HEK293 (cell line): ENCODE measurements at regions of chr1 and their contacts with region 1.

Region 1: GRCh38 chr1:9861360-9861759 is 37.6 kb upstream of the CLSTN1 start:
- H3K4me3 ChIP-seq: no peak overlapping the region
- H3K27ac ChIP-seq: no peak overlapping the region
- H3K4me1 ChIP-seq: no peaks in the 10 kb centered on the region
- CTCF ChIP-seq: no peak

Region 2: GRCh38 chr1:9792156-9793042 is 69.0 kb before region 1 on chr1:
- CTCF ChIA-PET with region 1: interaction called, 135 read pairs
- POLR2A ChIA-PET with region 1: no interaction called
- H3K4me3 ChIP-seq: no peak overlapping the region
- H3K27ac ChIP-seq: no peak overlapping the region
- H3K4me1 ChIP-seq: peaks cover 8% of the 10 kb centered on the region
- CTCF ChIP-seq: peak; percentile 37

Region 3: DNA sequence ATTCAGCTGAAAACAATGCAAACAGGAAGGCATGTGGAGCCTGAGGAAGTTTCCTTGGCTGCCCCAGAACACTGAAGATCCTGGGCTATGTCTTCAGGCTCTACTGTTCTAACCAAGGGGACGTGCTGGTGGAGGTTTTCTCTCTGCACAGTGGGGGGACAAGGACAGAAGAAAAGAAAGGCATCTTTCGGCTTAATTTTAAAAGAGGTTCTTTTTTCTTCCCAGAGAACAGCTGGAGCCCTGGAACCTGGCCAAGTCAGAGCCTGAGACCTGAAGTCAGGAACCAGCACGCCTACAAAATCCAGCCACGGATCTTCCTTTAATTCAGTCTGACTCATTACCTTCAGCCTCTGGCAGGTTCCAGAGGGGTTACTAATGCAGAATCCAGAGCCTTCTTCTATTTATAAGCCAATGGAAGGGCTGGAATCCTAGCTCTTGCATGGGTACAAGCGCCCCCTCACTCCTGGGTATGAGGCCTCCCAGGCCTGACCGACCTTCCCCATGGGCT is 28.9 kb after region 1 on chr1:
- CTCF ChIA-PET with region 1: no interaction called
- POLR2A ChIA-PET with region 1: no interaction called
- H3K4me3 ChIP-seq: no peak overlapping the region
- H3K27ac ChIP-seq: peak overlapping the region; percentile 27
- H3K4me1 ChIP-seq: peaks cover 23% of the 10 kb centered on the region
- CTCF ChIP-seq: no peak